ENCODE measurements at regions of chr7 and their contacts with region 1.

Region 1: DNA sequence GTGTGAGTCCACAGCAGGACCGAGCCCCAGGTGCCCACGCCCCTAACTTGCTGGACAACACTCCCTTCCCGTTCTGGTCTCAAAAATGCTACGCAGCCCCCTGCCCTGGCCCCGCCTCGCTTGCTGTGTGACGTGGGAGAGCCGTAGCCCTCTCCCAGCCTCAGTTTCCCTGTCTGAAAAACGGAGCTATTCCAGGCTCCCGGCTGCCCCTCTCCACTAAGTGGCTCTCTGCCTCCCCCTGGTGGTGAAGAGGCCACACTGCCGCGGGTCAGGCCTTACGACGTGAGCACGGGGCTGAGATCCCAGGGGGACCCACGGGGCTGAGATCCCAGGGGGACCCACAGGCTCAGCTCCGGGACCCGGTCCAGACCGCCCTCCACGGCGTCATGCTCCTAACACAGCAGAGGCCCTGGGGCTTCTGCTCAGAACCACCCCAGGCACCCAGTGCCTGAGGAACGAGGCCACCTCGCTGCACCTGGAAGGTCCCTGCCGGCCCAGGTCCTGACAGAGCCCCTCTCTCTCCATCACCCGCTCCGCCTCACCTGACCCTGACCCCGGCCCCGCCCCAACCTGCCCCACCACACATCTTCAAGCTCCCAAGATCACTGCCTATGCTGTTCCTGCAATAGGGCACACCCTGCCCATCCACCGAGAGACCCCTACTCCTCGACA is 26.7 kb downstream of the MICALL2 start:
- DNase-seq: peak; percentile 60 to 66
- ATAC-seq: peak; percentile 61 to 84
- H3K4me3 ChIP-seq: no peak overlapping the region
- H3K27ac ChIP-seq: no peak overlapping the region
- H3K4me1 ChIP-seq: peaks cover 4% of the 10 kb centered on the region; the same call in 2 of the 3 replicates
- CTCF ChIP-seq: peak; percentile 81
- EP300 ChIP-seq: no peak
- POLR2A ChIP-seq: no peak
- RAD21 ChIP-seq: peak; percentile 68 to 76

Region 2: GRCh38 chr7:1345796-1346755 is 86.5 kb before region 1 on chr7:
- CTCF ChIA-PET with region 1: no interaction called
- POLR2A ChIA-PET with region 1: no interaction called
- DNase-seq: no peak
- ATAC-seq: no peak
- H3K4me3 ChIP-seq: no peak overlapping the region
- H3K27ac ChIP-seq: no peak overlapping the region
- H3K4me1 ChIP-seq: no peaks in the 10 kb centered on the region
- CTCF ChIP-seq: no peak
- EP300 ChIP-seq: no peak
- POLR2A ChIP-seq: no peak
- RAD21 ChIP-seq: no peak

Region 3: GRCh38 chr7:1403638-1404459 is 28.7 kb before region 1 on chr7:
- CTCF ChIA-PET with region 1: interaction called, 16 read pairs
- POLR2A ChIA-PET with region 1: no interaction called
- DNase-seq: peak in 1 of 2 experiments; percentile 65
- ATAC-seq: peak; percentile 38 to 70
- H3K4me3 ChIP-seq: peak overlapping the region; percentile 24; the same call in 2 of the 3 replicates
- H3K27ac ChIP-seq: no peak overlapping the region
- H3K4me1 ChIP-seq: peaks cover 14% of the 10 kb centered on the region; the same call in 2 of the 3 replicates
- CTCF ChIP-seq: no peak
- EP300 ChIP-seq: no peak
- POLR2A ChIP-seq: no peak
- RAD21 ChIP-seq: 0 out of 5 replicates have a peak, but pooled peaks of 1 of the 2 experiments have one; percentile 8

Region 4: GRCh38 chr7:1418505-1419309 is 13.8 kb before region 1 on chr7:
- CTCF ChIA-PET with region 1: interaction called, 28 read pairs
- POLR2A ChIA-PET with region 1: no interaction called
- DNase-seq: peak; percentile 52 to 77
- ATAC-seq: peak; percentile 28 to 52; a peak in 5 of 6 replicates
- H3K4me3 ChIP-seq: no peak overlapping the region
- H3K27ac ChIP-seq: no peak overlapping the region
- H3K4me1 ChIP-seq: no peaks in the 10 kb centered on the region
- CTCF ChIP-seq: no peak
- EP300 ChIP-seq: no peak
- POLR2A ChIP-seq: no peak
- RAD21 ChIP-seq: no peak

Region 5: DNA sequence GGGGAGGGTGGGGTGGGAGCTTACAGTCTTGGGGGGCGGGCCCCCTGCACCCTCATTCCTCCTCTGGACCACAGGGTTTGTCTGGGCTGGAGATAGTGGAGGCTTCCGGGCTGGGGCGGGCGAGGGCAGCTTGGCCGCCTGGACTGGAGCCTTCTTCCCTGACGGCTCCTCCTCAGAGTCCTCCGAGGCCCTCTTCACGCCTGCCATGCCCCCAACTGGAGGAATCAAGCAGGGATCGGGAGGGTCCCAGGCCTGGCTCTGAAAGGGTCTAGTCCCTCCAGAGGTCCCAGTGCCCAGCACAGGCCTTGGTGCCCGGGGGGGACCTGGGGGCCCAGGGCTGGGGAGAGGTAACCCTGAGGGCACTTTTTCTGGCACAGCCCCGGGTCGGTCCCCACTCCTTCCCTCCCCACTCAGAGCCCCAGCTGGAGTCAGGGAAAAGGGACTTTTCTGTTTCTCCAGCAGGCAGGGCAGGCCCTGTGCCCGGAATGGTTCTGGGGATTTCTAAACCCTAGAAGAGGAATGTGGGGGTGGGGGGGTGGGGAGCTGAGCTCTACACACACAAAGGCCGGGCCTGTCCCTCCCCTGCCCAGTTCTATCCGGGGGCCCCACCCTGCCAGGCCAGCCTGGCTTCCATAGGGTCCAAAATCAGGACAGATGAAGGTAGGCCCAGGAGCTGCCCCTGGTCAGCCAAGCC is 15.2 kb after region 1 on chr7:
- CTCF ChIA-PET with region 1: interaction called, 41 read pairs
- POLR2A ChIA-PET with region 1: no interaction called
- DNase-seq: no peak
- ATAC-seq: peak; percentile 11 to 35; a peak in 4 of 6 replicates
- H3K4me3 ChIP-seq: no peak overlapping the region
- H3K27ac ChIP-seq: peak overlapping the region in 1 of 2 experiments; percentile 24; a peak in 1 of 6 replicates
- H3K4me1 ChIP-seq: peaks cover 7% of the 10 kb centered on the region; the same call in 2 of the 3 replicates
- CTCF ChIP-seq: no peak
- EP300 ChIP-seq: no peak
- POLR2A ChIP-seq: no peak
- RAD21 ChIP-seq: no peak

Region 6: DNA sequence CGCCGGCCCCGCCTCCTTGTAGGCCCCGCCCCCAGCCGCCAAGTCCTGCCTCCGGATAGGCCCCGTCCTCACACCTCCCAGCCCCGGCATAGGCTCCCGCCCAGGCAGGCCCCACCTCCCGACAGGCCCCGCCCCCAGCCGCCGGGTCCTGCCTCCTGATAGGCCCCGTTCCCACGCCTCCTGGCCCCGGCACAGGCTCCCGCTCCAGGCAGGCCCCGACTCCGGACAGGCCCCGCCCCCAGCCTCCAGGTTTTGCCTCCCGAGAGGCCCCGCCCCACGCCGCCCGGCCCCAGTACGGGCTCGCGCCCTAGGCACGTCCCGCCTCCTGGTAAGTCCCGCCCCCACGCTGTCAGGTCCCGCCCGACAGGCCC is 27.0 kb after region 1 on chr7:
- CTCF ChIA-PET with region 1: interaction called, 44 read pairs
- POLR2A ChIA-PET with region 1: no interaction called
- DNase-seq: peak; percentile 99
- ATAC-seq: peak; percentile 67 to 88
- H3K4me3 ChIP-seq: peak overlapping the region; percentile 96
- H3K27ac ChIP-seq: peak overlapping the region in 1 of 2 experiments; percentile 88; a peak in 3 of 6 replicates
- H3K4me1 ChIP-seq: peaks cover 65% of the 10 kb centered on the region
- CTCF ChIP-seq: no peak
- EP300 ChIP-seq: no peak
- POLR2A ChIP-seq: no peak
- RAD21 ChIP-seq: no peak

Region 7: GRCh38 chr7:1810961-1811849 is 378.7 kb after region 1 on chr7:
- CTCF ChIA-PET with region 1: no interaction called
- POLR2A ChIA-PET with region 1: no interaction called
- DNase-seq: no peak
- ATAC-seq: no peak
- H3K4me3 ChIP-seq: no peak overlapping the region
- H3K27ac ChIP-seq: no peak overlapping the region
- H3K4me1 ChIP-seq: no peaks in the 10 kb centered on the region
- CTCF ChIP-seq: no peak
- EP300 ChIP-seq: no peak
- POLR2A ChIP-seq: no peak
- RAD21 ChIP-seq: no peak